Endothelial cell of umbilical vein (primary cell): ENCODE measurements at regions of chr1 and their contacts with region 1.

Region 1: GRCh38 chr1:27772933-27773825 is at the start of gene STX12:
- DNase-seq: peak; percentile 100
- H3K4me3 ChIP-seq: peak within 1 kb of the TSS; percentile 63 to 99 (median 90)
- H3K27ac ChIP-seq: peak within 1 kb of the TSS; percentile 82
- H3K4me1 ChIP-seq: peaks cover 23% of the 10 kb centered on the region
- H3K27me3 ChIP-seq: no peaks in the 10 kb centered on the region
- CTCF ChIP-seq: no peak
- POLR2A ChIP-seq: peak; percentile 88
- total RNA-seq, gene STX12: 83.8 and 90.3 TPM in 2 replicates

Region 2: DNA sequence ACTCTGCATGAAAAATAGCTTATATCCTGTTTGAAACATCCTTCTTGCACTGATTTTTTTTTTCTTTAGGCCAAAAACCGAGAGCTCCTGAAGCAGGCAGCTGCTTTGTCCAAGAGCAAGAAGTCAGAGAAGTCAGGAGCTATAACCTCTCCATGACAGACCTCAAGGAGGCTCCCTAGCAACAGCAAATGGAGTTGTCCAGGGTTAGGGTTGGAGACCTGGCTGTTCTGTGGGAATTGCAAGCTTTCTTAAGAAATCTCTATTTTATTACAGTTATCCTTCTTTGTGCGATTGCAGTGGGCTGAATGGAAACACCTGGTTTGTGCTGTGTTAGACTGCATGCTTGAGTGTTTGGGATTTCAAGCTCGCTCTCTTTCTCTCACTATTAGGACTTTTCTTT is 12.8 kb before region 1 on chr1:
- CTCF ChIA-PET with region 1: interaction called, 19 read pairs
- POLR2A ChIA-PET with region 1: interaction called, 8 read pairs
- dilution Hi-C with region 1: no loop called
- intact Hi-C with region 1: no loop called
- DNase-seq: peak; percentile 37
- H3K4me3 ChIP-seq: no peak overlapping the region
- H3K27ac ChIP-seq: no peak overlapping the region
- H3K4me1 ChIP-seq: no peaks in the 10 kb centered on the region
- H3K27me3 ChIP-seq: no peaks in the 10 kb centered on the region
- CTCF ChIP-seq: no peak
- POLR2A ChIP-seq: no peak

Region 3: GRCh38 chr1:27789540-27790041 is 16.4 kb after region 1 on chr1:
- CTCF ChIA-PET with region 1: interaction called, 21 read pairs
- POLR2A ChIA-PET with region 1: interaction called, 67 read pairs
- dilution Hi-C with region 1: no loop called
- intact Hi-C with region 1: loop called (anchors 1 kb)
- DNase-seq: peak; percentile 92
- H3K4me3 ChIP-seq: peak overlapping the region in 1 of 3 experiments; percentile 7
- H3K27ac ChIP-seq: peak overlapping the region; percentile 79
- H3K4me1 ChIP-seq: peaks cover 37% of the 10 kb centered on the region
- H3K27me3 ChIP-seq: no peaks in the 10 kb centered on the region
- CTCF ChIP-seq: no peak
- POLR2A ChIP-seq: peak; percentile 19

Region 4: DNA sequence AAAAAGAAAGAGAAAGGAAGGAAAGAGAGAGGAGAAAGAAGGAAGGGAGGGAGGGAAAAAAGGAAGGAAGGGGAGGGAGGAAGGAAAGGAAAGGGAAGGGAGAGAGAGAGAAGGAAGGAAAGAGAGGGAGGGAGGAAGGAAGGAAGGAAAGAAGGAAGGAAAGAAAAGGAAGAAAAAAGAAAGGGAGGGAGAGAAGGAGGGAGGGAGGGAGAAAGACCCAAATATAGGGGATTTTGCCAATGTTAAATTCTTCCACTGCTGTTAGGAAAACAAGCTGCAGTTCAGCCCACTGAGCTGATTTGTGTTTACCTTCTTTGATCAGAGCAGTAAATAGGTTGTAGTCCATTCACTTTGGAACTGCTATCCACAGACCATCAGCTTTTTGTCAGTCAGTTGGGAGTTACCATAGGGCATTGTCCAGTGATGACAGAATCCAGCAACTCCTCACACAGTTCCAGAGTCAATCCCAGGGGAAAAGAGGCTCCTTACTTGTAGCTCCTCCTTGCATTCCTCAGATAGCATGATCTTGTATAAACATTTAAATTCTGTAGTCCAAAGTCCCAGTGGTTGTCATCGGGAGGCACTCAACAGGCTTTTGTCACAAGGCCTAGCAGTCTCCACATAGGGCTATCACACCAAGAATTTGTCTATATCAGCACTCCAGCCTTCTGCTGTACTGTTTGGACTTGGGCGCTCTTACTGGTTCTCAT is 43.9 kb after region 1 on chr1:
- CTCF ChIA-PET with region 1: no interaction called
- POLR2A ChIA-PET with region 1: no interaction called
- dilution Hi-C with region 1: no loop called
- intact Hi-C with region 1: no loop called
- DNase-seq: no peak
- H3K4me3 ChIP-seq: no peak overlapping the region
- H3K27ac ChIP-seq: no peak overlapping the region
- H3K4me1 ChIP-seq: no peaks in the 10 kb centered on the region
- H3K27me3 ChIP-seq: no peaks in the 10 kb centered on the region
- CTCF ChIP-seq: no peak
- POLR2A ChIP-seq: no peak

Region 5: GRCh38 chr1:27830621-27831424 is 57.6 kb after region 1 on chr1 and contains the start of gene PPP1R8:
- CTCF ChIA-PET with region 1: interaction called, 4 read pairs
- POLR2A ChIA-PET with region 1: interaction called, 4 read pairs
- dilution Hi-C with region 1: no loop called
- intact Hi-C with region 1: loop called (anchors 1 kb)
- DNase-seq: peak; percentile 96
- H3K4me3 ChIP-seq: peak within 1 kb of the TSS; percentile 90 to 93 (median 92)
- H3K27ac ChIP-seq: peak within 1 kb of the TSS; percentile 86
- H3K4me1 ChIP-seq: peaks cover 19% of the 10 kb centered on the region
- H3K27me3 ChIP-seq: no peaks in the 10 kb centered on the region
- CTCF ChIP-seq: no peak
- POLR2A ChIP-seq: peak; percentile 97
- total RNA-seq, gene PPP1R8: 45.4 and 48.5 TPM in 2 replicates